Aorta (tissue), 5 donors: ENCODE measurements at regions of chr2 and their contacts with region 1.

Region 1: GRCh38 chr2:239630618-239631286 is 229.9 kb upstream of the HDAC4 start:
- DNase-seq: peak in 1 of 2 donors; percentile 72
- ATAC-seq: peak; percentile 53
- H3K4me3 ChIP-seq: no peak overlapping the region
- H3K27ac ChIP-seq: peak overlapping the region in 1 of 2 donors; percentile 1
- H3K4me1 ChIP-seq: no peaks in the 10 kb centered on the region
- H3K27me3 ChIP-seq: no peaks in the 10 kb centered on the region

Region 2: GRCh38 chr2:239358062-239358754 is 272.5 kb before region 1 on chr2:
- intact Hi-C with region 1: no loop called
- DNase-seq: peak in 1 of 2 donors; percentile 40
- ATAC-seq: no peak
- H3K4me3 ChIP-seq: no peak overlapping the region
- H3K27ac ChIP-seq: no peak overlapping the region
- H3K4me1 ChIP-seq: peaks cover 0 to 5% of the 10 kb centered on the region in 2 donors
- H3K27me3 ChIP-seq: no peaks in the 10 kb centered on the region

Region 3: GRCh38 chr2:239756790-239757760 is 126.3 kb after region 1 on chr2:
- intact Hi-C with region 1: loop called in 1 of 2 experiments (anchors 2 kb)
- DNase-seq: no peak
- ATAC-seq: peak; percentile 65
- H3K4me3 ChIP-seq: no peak overlapping the region
- H3K27ac ChIP-seq: peak overlapping the region; percentile 58 to 95
- H3K4me1 ChIP-seq: no peaks in the 10 kb centered on the region
- H3K27me3 ChIP-seq: no peaks in the 10 kb centered on the region